Panc1 (cell line): ENCODE measurements at regions of chr2 and their contacts with region 1.

Region 1: DNA sequence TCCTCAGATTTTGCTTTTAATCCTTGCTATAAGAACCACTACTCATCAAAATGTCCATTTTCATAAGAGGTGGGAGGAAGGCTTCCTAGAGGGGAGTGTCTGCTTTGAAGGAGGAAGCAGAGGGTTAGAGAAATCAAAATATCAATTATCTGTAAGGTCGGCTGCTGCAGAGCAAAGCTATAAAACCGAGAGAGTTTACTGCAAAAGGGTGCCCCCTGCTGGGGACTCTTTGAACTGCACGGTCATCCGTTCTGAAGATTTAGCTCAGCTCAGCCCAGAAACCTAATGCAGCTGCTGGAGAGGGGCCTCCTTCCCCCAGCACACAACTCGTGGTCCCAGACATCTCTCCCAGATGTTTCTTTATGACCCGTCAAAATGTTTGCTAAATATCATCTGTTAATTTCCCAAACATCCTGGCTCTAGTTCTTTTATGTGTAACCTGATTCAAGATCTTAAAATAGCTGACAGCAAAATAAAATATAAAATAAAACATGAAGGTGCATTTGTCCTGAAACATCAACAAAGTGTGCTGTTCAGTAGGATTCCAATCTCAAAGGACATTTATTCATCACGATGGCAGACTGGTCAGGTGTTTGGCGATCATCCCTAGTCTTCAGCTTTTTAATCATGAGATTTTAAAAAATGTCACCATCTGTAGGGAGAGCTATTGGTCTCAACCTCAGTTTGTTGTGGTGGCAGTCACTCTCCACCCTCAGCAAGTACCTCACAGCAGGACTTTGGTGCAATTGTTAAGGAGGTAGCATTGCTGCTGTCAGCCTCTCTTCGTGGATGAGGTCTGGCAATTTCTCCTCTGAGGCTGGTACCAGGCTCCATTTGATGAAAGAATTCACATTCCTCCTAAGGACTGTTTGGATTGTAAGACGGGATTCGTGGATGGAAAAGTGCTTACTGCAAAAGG is 185.9 kb downstream of the MTX2 start:
- DNase-seq: peak; percentile 55
- ATAC-seq: peak; percentile 82
- H3K4me3 ChIP-seq: no peak overlapping the region
- H3K27ac ChIP-seq: no peak overlapping the region
- H3K4me1 ChIP-seq: no peaks in the 10 kb centered on the region
- H3K27me3 ChIP-seq: no peaks in the 10 kb centered on the region
- CTCF ChIP-seq: peak; percentile 91

Region 2: GRCh38 chr2:176135034-176135440 is 320.1 kb before region 1 on chr2:
- CTCF ChIA-PET with region 1: interaction called, 37 read pairs
- POLR2A ChIA-PET with region 1: no interaction called
- in situ Hi-C with region 1: no loop called
- intact Hi-C with region 1: loop called (anchors 2 kb)
- DNase-seq: no peak
- ATAC-seq: no peak
- H3K4me3 ChIP-seq: no peak overlapping the region
- H3K27ac ChIP-seq: peak overlapping the region; percentile 77
- H3K4me1 ChIP-seq: peaks cover 15% of the 10 kb centered on the region
- H3K27me3 ChIP-seq: no peaks in the 10 kb centered on the region
- CTCF ChIP-seq: peak; percentile 29; the same call in 1 of the 2 replicates

Region 3: DNA sequence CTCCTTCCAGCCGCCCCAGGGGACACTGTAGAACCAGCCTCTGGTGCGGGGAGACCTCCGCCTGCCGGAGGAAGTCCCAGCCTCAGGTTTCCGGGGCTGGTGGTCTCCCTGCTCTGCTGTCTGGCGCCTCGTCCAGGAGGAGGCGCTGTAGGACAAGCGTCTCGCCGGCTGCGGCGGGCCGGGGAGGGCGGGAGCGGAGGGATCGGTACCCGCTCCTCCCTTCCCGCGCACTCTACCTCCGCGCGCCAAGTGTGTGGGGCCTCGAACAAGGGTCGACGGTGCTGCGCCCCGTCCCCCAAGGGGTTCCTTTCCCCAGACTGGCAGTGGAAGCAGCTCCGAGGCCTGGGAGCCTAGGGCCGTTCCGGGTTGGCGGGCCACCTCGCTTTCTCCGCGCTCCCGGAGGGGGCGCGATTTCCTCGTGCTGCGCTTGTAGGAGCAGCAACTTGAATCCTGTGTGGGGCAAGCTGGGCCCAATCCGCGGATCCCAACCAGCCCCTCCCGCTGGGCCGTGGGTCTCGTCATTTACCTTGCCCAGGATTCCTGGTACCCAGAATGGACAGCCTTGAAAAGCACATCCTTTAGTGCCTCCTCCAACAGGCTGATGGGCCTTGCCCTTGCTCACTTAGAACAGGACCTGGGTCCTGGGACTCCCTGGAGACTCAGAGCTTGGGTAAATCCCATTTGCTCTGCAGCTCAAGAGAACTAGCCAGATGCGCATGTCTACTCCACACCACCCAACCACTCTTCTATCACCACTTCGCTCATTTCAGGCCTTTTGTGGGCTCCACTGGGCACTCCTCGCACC is 314.4 kb before region 1 on chr2:
- CTCF ChIA-PET with region 1: interaction called, 37 read pairs
- POLR2A ChIA-PET with region 1: no interaction called
- in situ Hi-C with region 1: no loop called
- intact Hi-C with region 1: loop called (anchors 2 kb)
- DNase-seq: no peak
- ATAC-seq: peak; percentile 92
- H3K4me3 ChIP-seq: peak overlapping the region; percentile 48 to 58
- H3K27ac ChIP-seq: peak overlapping the region; percentile 71
- H3K4me1 ChIP-seq: peaks cover 4% of the 10 kb centered on the region; the same call in 1 of the 2 replicates
- H3K27me3 ChIP-seq: no peaks in the 10 kb centered on the region
- CTCF ChIP-seq: peak; percentile 96

Region 4: DNA sequence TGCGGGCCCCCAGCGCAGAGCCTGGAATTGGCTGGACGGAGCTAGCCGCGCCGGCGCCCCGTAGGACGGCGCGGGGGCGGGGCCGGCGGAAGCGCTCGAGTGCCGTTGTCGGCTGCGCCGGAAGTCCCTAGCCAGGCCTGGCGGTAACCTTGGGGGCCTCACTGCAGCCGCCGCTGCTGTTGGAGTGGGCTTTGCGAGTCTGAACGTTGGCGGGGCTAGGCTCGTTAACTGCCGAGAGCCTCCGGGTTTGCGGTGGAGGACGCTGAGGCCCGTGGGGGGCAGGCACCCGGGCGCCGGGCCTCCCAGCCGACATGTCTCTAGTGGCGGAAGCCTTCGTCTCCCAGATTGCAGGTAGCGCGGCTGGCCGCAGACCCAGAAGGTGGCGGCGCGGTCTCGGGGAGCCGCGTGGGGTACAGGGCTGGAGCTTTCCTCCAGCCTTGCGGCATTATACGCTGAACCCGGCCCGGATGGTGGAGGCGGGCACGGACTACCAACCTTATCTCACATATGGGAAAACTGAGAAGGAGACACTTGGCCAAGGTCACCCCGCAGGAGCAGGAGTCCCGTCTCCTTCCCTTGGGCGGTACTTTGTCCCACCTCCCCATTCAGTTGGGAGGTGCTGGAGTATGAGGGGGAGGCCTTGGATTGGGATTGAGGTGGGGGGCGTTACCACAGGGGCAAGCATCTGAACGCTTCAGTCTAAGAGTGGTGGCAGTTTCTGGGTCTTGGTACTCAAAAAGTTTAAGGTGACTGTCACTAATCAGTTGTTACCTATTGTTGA is 185.6 kb before region 1 on chr2 and contains the start of gene MTX2:
- CTCF ChIA-PET with region 1: no interaction called
- POLR2A ChIA-PET with region 1: no interaction called
- in situ Hi-C with region 1: no loop called
- intact Hi-C with region 1: loop called (anchors 10 kb)
- DNase-seq: no peak
- ATAC-seq: peak; percentile 100
- H3K4me3 ChIP-seq: peak within 1 kb of the TSS; percentile 81 to 99
- H3K27ac ChIP-seq: peak within 1 kb of the TSS; percentile 84
- H3K4me1 ChIP-seq: peaks cover 9% of the 10 kb centered on the region; the same call in 1 of the 2 replicates
- H3K27me3 ChIP-seq: no peaks in the 10 kb centered on the region
- CTCF ChIP-seq: 0 out of 2 replicates have a peak, but pooled peaks have one; percentile 10
- total RNA-seq, gene MTX2: 28.7 TPM

Region 5: GRCh38 chr2:176317199-176317598 is 138.0 kb before region 1 on chr2:
- CTCF ChIA-PET with region 1: interaction called, 10 read pairs
- POLR2A ChIA-PET with region 1: no interaction called
- in situ Hi-C with region 1: no loop called
- intact Hi-C with region 1: no loop called
- DNase-seq: no peak
- ATAC-seq: no peak
- H3K4me3 ChIP-seq: no peak overlapping the region
- H3K27ac ChIP-seq: no peak overlapping the region
- H3K4me1 ChIP-seq: no peaks in the 10 kb centered on the region
- H3K27me3 ChIP-seq: no peaks in the 10 kb centered on the region
- CTCF ChIP-seq: no peak

Region 6: DNA sequence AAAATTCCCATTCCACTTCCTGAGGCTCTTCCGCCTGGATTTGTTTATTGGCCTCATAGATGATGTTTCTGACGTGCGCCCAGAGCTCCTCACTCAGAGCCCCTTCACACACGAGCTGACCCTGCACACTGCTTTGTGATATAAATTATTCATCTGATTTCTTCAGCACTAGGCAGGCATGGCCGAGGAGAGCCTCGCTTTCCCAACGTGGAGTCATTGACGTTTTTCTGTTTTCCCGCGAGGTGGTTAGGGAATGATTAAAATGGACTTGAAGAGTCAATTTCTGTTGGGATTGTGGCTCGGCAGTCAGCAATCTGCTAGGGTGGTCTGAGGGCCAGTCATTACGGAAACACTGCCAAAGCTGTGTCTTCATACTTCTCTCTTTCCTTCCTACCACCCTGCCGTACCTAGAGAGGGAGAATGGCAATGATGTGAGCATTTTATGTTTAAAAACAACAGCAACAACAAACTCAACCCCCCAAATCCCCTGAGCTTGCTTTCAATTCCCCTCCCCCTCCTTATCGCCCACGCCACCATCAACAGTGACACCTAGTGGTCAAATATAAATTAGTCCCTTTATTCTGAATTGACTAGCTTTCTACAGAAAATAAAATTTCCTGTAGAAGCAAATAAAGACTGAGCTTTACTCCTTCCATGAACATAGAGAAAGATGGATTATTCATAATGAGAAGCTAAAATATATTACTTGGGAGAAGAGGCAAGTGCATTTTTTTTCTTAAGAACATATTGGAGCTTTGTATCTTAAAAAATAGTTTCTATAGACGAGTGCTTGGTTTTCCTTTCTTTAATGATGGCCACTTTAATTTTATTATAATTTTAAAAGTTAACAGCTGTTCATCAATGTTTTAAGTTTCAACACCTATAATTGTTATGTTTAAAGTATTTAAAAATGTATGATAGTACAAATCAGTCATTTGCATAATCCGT is 99.2 kb after region 1 on chr2:
- CTCF ChIA-PET with region 1: interaction called, 4 read pairs
- POLR2A ChIA-PET with region 1: no interaction called
- in situ Hi-C with region 1: no loop called
- intact Hi-C with region 1: loop called (anchors 1 kb)
- DNase-seq: peak; percentile 32
- ATAC-seq: peak; percentile 78
- H3K4me3 ChIP-seq: peak overlapping the region; percentile 49 to 78
- H3K27ac ChIP-seq: peak overlapping the region; percentile 73
- H3K4me1 ChIP-seq: peaks cover 5% of the 10 kb centered on the region; the same call in 1 of the 2 replicates
- H3K27me3 ChIP-seq: no peaks in the 10 kb centered on the region
- CTCF ChIP-seq: peak; percentile 81